CD14-positive monocyte (primary cell): ENCODE measurements at regions of chr14 and their contacts with region 1.

Region 1: DNA sequence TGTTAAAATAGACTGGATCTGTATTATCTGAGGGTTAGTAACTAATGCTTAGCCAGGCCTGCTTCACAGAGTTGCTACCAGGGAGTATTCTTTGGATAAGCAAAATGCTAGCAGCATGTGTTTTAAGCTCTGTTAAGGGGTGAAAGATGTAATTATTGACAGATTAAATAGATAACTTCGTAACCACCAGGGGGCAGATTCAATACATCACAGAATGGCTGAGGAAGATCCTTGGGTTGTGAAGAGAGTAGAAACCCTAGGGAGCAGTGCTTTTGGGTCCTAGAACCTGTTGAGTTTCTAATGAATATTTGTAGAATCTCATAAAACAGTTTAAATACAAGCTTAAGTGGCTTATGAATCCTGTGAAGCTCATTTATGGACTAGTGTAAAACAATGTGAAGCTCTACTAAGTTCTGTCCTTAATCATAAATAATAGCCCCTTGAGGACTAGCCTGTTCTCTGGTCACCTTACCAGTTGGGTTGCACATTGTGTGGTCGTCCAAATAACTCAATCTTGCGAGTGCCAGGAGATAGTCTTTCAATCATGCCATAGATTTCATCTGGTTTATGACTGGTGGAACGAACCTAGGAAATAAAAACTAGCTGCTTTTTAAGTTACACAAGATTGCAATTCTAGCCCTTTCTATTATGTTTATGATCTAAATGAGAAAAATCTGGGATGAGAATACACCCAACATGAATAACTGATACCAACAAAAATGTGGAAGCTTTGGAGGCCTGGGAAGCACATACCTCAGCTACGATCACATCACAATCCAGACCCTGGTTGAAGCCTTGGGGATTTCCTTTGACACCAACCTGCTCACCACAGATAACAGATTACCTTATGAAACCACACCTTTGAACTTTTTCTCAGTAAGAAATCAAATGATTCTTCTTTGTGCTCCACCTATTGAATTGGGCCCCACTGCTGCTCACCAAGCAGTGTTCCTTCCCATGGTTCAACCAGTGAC is 12.3 kb downstream of the METTL3 start:
- DNase-seq: peak; percentile 9 to 25 (median 16)
- H3K4me3 ChIP-seq: no peak overlapping the region
- H3K4me3 Mint-ChIP-seq: no peak overlapping the region
- H3K27ac ChIP-seq: no peak overlapping the region
- H3K27ac Mint-ChIP-seq: no peak overlapping the region
- H3K4me1 ChIP-seq: no peaks in the 10 kb centered on the region
- H3K4me1 Mint-ChIP-seq: no peaks in the 10 kb centered on the region
- H3K27me3 ChIP-seq: no peaks in the 10 kb centered on the region
- H3K27me3 Mint-ChIP-seq: peaks cover 0 to under 1% (median 0%) of the 10 kb centered on the region in 3 donors
- CTCF ChIP-seq: peak; percentile 70

Region 2: DNA sequence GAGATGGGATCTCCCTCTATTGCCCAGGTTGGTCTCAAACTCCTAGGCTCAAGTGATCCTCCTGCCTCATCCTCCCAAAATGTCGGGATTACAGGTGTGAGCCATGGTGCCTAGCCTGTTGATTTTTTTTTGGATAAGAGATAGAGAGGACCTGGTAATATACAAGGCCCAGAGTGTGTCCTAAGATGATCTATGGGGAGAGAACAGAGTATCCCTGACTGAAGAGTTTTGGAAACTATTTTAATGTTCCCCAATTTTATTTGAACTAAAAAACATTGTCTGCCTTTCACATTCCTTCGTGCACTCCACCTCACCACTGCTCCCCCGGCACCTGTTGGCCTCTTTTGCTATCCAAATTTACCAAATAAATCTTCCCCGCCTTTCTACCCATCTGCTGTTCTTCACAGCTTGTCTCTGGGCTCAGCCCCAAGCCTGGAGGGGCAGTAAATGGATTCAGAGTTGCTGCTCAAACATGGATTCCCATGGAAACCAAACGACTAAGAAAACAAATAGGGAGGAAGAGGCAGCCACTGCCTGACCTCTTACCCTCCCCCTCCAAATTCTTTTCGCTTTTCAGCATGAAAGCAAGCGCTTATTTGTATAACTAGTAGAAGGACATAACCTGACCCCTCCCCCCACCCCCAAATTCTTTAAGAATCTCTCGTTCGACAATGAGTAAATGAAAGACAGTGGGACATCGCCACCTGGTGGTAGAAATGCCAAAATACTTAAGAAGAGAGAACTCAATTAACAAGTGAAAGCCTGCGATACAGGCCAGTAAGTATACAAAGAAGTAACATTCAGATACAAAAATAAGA is 58.5 kb after region 1 on chr14:
- intact Hi-C with region 1: loop called (anchors 2 to 5 kb)
- DNase-seq: peak; percentile 65 to 80 (median 72)
- H3K4me3 ChIP-seq: peak overlapping the region; percentile 10 to 60 (median 29)
- H3K4me3 Mint-ChIP-seq: peak overlapping the region; percentile 61 to 68
- H3K27ac ChIP-seq: no peak overlapping the region
- H3K27ac Mint-ChIP-seq: peak overlapping the region in 2 of 7 donors; percentile 1 to 22
- H3K4me1 ChIP-seq: peaks cover 5% of the 10 kb centered on the region in 2 donors
- H3K4me1 Mint-ChIP-seq: peaks cover 5% of the 10 kb centered on the region
- H3K27me3 ChIP-seq: no peaks in the 10 kb centered on the region
- H3K27me3 Mint-ChIP-seq: peaks cover 0 to 4% (median 3%) of the 10 kb centered on the region in 3 donors
- CTCF ChIP-seq: peak; percentile 82